Activated CD8-positive, alpha-beta T cell treated with anti-CD3 and anti-CD28 coated beads for 36 hours (primary cell): ENCODE measurements at regions of chr3 and their contacts with region 1.

Region 1: DNA sequence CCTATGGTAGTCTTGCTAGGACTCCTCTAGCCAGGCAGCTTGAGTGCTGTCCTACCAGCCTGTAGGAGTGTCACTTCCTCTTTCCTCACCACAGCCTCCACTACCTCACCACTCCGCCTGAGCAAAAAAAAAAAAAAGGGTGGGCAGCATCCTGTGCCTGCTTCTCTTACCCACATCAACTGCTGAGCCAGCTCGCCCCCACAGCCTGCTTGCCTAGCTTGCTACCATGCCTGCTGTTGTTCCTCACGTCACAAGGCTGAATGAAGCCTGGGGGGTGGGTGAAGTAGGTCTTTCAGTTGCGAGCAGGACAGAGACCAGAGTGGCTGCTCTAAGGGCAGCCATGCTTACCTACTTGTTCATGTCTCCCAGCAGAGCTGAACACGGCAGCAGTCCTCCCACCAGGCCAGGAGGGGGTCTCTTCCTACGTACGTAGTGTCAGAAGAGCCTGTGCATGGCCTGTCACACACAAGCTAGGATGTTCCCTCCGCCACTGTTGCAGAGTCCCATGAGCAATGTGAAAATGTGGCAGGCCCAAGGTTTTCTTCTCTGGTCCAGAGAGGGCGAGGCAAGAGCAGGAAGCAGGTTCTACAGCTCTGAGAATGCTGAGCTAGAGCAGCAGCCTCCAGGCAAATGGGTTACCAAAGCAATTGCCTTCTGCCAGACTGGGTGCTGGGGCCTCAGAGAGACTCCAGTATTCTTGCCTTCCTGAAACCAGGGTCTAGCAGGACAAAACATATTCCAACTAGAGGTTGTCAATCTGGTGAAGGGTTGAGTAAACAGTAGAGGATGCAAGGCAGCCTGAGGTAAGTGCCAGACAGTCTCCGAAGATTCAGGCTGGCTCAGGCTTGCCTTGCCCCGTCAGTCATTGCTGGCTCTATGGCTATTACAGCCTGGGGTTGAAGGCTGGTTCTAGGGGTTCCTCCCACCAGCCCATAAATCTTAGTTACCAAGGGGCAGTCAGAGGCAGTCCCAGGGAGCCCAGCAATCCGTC is 8.1 kb downstream of the PPM1M start:
- DNase-seq: peak; percentile 96
- ATAC-seq: peak; percentile 88
- H3K4me3 Mint-ChIP-seq: peak overlapping the region; percentile 70
- H3K27ac Mint-ChIP-seq: peak overlapping the region; percentile 99
- H3K4me1 Mint-ChIP-seq: peaks cover 85% of the 10 kb centered on the region
- H3K27me3 Mint-ChIP-seq: no peaks in the 10 kb centered on the region
- CTCF ChIP-seq: no peak

Region 2: GRCh38 chr3:52238761-52239701 is 14.6 kb before region 1 on chr3 and contains the start of gene TWF2:
- CTCF ChIA-PET with region 1: interaction called, 25 read pairs
- POLR2A ChIA-PET with region 1: interaction called, 77 read pairs
- intact Hi-C with region 1: no loop called
- DNase-seq: peak; percentile 91
- ATAC-seq: peak; percentile 74
- H3K4me3 Mint-ChIP-seq: peak within 1 kb of the TSS; percentile 99
- H3K27ac Mint-ChIP-seq: peak within 1 kb of the TSS; percentile 97
- H3K4me1 Mint-ChIP-seq: peaks cover 67% of the 10 kb centered on the region
- H3K27me3 Mint-ChIP-seq: no peaks in the 10 kb centered on the region
- CTCF ChIP-seq: peak; percentile 30
- total RNA-seq, gene TWF2: 137 TPM

Region 3: GRCh38 chr3:52270252-52270754 is 16.7 kb after region 1 on chr3:
- CTCF ChIA-PET with region 1: interaction called, 17 read pairs
- POLR2A ChIA-PET with region 1: interaction called, 949 read pairs
- intact Hi-C with region 1: no loop called
- DNase-seq: no peak
- ATAC-seq: no peak
- H3K4me3 Mint-ChIP-seq: peak overlapping the region; percentile 99
- H3K27ac Mint-ChIP-seq: peak overlapping the region; percentile 96
- H3K4me1 Mint-ChIP-seq: peaks cover 81% of the 10 kb centered on the region
- H3K27me3 Mint-ChIP-seq: no peaks in the 10 kb centered on the region
- CTCF ChIP-seq: peak; percentile 15